Activated CD8-positive, alpha-beta T cell treated with anti-CD3 and anti-CD28 coated beads for 36 hours (primary cell): ENCODE measurements at regions of chr17 and their contacts with region 1.

Region 1: GRCh38 chr17:46154151-46154816 is 38.9 kb downstream of the KANSL1 start:
- DNase-seq: peak; percentile 45
- ATAC-seq: peak; percentile 32
- H3K4me3 Mint-ChIP-seq: peak overlapping the region; percentile 32
- H3K27ac Mint-ChIP-seq: peak overlapping the region; percentile 78
- H3K4me1 Mint-ChIP-seq: peaks cover 84% of the 10 kb centered on the region
- H3K27me3 Mint-ChIP-seq: no peaks in the 10 kb centered on the region
- CTCF ChIP-seq: no peak

Region 2: DNA sequence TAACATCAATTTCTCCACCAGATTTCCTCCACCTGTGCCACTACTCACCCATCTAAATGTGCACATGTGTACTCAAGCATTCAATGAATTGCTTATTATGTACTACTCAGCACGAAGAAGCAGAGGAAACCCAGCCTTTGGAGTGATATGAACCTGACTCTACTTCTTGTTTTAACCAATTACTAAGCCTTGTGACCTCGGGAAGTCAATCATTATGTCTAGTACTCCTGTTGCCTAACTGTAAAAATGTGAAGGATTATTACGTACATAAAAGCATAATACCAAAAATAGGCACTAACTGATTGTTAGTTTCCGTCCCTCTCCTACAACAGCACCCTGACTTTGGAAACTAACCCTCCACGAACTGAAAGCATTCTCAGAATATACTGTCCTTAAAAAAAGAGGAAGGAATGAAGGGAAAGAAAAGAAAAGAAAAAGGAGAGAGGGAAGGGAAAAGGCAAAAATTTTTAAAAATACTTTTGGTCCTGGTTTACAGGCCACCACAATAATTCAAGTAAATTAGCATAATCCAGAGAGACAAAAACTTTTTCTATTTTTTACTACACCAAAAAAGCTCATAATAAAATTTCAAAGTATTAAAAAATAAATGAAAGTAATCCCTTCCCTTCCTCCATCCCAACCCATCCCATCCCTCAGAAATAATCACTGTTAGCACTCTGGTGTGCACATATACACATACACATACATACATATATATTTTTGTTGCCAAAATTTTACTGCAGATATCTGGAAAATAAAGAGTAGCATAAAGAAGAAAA is 14.7 kb before region 1 on chr17:
- CTCF ChIA-PET with region 1: interaction called, 9 read pairs
- POLR2A ChIA-PET with region 1: interaction called, 17 read pairs
- intact Hi-C with region 1: no loop called
- DNase-seq: no peak
- ATAC-seq: no peak
- H3K4me3 Mint-ChIP-seq: no peak overlapping the region
- H3K27ac Mint-ChIP-seq: no peak overlapping the region
- H3K4me1 Mint-ChIP-seq: peaks cover 87% of the 10 kb centered on the region
- H3K27me3 Mint-ChIP-seq: no peaks in the 10 kb centered on the region
- CTCF ChIP-seq: no peak

Region 3: GRCh38 chr17:46171939-46172338 is 17.7 kb after region 1 on chr17:
- CTCF ChIA-PET with region 1: interaction called, 14 read pairs
- POLR2A ChIA-PET with region 1: interaction called, 7 read pairs
- intact Hi-C with region 1: no loop called
- DNase-seq: no peak
- ATAC-seq: peak; percentile 72
- H3K4me3 Mint-ChIP-seq: peak overlapping the region; percentile 15
- H3K27ac Mint-ChIP-seq: peak overlapping the region; percentile 80
- H3K4me1 Mint-ChIP-seq: peaks cover 88% of the 10 kb centered on the region
- H3K27me3 Mint-ChIP-seq: no peaks in the 10 kb centered on the region
- CTCF ChIP-seq: no peak